ENCODE measurements at regions of chr1 and their contacts with region 1.

Region 1: DNA sequence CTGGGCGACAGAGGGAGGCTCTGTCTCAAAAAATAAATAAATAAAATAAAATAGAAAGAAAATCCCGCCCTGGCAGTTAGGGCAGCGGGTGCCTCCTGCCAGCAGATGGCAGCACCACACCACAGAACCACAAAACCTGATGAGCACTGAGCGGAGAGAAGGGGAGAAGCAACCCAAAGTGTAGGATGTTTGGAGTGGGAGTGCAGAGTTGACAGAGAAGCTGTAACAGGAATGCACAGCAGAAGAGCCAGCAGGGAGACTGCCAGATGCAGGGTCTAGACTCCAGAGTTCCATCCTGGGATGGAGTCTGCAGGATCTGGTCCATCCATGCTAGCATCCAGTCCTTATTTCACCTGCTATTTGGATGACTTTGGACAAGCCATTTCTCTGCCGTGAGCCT is 29.7 kb upstream of the KIRREL1 start:
- DNase-seq: peak; percentile 91
- H3K4me3 Mint-ChIP-seq: no peak overlapping the region
- H3K27ac Mint-ChIP-seq: no peak overlapping the region
- H3K4me1 Mint-ChIP-seq: peaks cover 25% of the 10 kb centered on the region
- H3K27me3 Mint-ChIP-seq: peaks cover 18% of the 10 kb centered on the region
- CTCF ChIP-seq: peak; percentile 99

Region 2: DNA sequence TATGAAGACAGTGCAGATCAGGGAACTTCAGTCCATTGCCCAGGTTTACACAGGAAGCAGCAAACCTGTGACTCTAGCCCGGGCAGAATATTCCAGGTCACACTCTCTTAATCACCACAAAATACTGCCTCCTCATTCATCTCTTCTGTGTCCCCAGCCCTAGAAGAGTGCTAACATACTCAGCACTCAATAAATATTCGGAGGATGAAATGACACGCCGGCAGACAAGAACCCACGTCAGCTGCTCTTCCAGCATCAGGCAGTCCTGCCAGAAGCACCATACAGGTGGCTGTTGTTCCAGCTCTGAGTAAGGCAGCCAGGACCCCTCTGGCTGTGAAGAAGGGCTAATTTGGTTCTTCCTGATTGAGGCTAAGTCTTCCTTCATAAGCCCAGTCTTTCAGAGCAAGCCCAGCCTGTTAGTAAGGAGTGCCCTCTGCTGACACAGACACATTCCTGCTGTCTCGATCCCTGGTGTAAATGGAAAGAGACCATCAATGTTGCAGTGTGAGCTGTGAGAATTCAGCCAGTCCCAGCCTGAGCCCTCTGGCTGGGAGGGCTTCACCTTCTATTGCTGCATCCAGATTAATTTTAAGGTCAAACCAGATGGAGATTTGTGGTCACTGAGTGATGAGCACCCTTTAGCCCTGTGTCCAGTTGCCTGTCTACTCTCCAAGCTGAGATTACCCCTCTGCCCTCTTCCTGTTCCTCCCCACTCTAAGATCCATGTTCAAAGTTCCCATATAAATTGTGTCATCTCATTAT is 15.2 kb before region 1 on chr1:
- CTCF ChIA-PET with region 1: interaction called, 156 read pairs
- POLR2A ChIA-PET with region 1: no interaction called
- intact Hi-C with region 1: no loop called
- DNase-seq: peak; percentile 65
- H3K4me3 Mint-ChIP-seq: no peak overlapping the region
- H3K27ac Mint-ChIP-seq: no peak overlapping the region
- H3K4me1 Mint-ChIP-seq: no peaks in the 10 kb centered on the region
- H3K27me3 Mint-ChIP-seq: peaks cover 84% of the 10 kb centered on the region
- CTCF ChIP-seq: peak; percentile 88

Region 3: DNA sequence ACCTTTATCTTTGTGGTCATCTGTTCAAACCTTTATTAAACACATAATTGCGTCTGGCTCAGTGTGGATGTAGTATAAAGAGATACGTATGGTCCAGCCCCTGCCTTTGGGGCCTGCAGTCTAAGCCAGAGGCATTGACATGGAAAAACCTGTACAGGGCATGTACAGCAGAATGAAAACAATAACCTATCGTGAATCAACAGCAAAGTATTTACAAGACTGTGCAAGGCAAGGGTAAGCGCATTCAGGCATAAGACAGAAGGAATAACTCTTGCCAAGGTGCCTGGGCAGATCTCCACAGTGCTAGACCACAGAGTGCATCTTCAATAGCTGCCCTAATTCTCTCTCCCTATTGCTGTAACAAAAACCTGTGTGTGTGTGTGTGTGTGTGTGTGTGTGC is 65.3 kb after region 1 on chr1:
- CTCF ChIA-PET with region 1: interaction called, 56 read pairs
- POLR2A ChIA-PET with region 1: interaction called, 11 read pairs
- intact Hi-C with region 1: no loop called
- DNase-seq: peak; percentile 72
- H3K4me3 Mint-ChIP-seq: no peak overlapping the region
- H3K27ac Mint-ChIP-seq: peak overlapping the region; percentile 63
- H3K4me1 Mint-ChIP-seq: peaks cover 42% of the 10 kb centered on the region
- H3K27me3 Mint-ChIP-seq: no peaks in the 10 kb centered on the region
- CTCF ChIP-seq: no peak

Region 4: GRCh38 chr1:158055854-158056253 is 92.1 kb after region 1 on chr1:
- CTCF ChIA-PET with region 1: interaction called, 10 read pairs
- POLR2A ChIA-PET with region 1: no interaction called
- intact Hi-C with region 1: no loop called
- DNase-seq: no peak
- H3K4me3 Mint-ChIP-seq: no peak overlapping the region
- H3K27ac Mint-ChIP-seq: no peak overlapping the region
- H3K4me1 Mint-ChIP-seq: peaks cover 27% of the 10 kb centered on the region
- H3K27me3 Mint-ChIP-seq: no peaks in the 10 kb centered on the region
- CTCF ChIP-seq: no peak

Region 5: GRCh38 chr1:158095737-158096335 is 132.1 kb after region 1 on chr1:
- CTCF ChIA-PET with region 1: interaction called, 56 read pairs
- POLR2A ChIA-PET with region 1: no interaction called
- intact Hi-C with region 1: no loop called
- DNase-seq: peak; percentile 56
- H3K4me3 Mint-ChIP-seq: no peak overlapping the region
- H3K27ac Mint-ChIP-seq: peak overlapping the region; percentile 10
- H3K4me1 Mint-ChIP-seq: peaks cover 9% of the 10 kb centered on the region
- H3K27me3 Mint-ChIP-seq: no peaks in the 10 kb centered on the region
- CTCF ChIP-seq: peak; percentile 67

Region 6: GRCh38 chr1:158203693-158204457 is 240.2 kb after region 1 on chr1:
- CTCF ChIA-PET with region 1: interaction called, 4 read pairs
- POLR2A ChIA-PET with region 1: no interaction called
- intact Hi-C with region 1: loop called (anchors 5 kb)
- DNase-seq: peak; percentile 84
- H3K4me3 Mint-ChIP-seq: no peak overlapping the region
- H3K27ac Mint-ChIP-seq: no peak overlapping the region
- H3K4me1 Mint-ChIP-seq: no peaks in the 10 kb centered on the region
- H3K27me3 Mint-ChIP-seq: peaks cover 81% of the 10 kb centered on the region
- CTCF ChIP-seq: peak; percentile 83